ENCODE measurements at regions of chr13 and their contacts with region 1.

Region 1: GRCh38 chr13:28792992-28793391 is 27.1 kb upstream of the MTUS2 start:
- DNase-seq: no peak
- ATAC-seq: no peak
- H3K4me3 ChIP-seq: no peak overlapping the region
- H3K27ac ChIP-seq: no peak overlapping the region
- H3K4me1 ChIP-seq: peaks cover 0 to 7% of the 10 kb centered on the region in 2 experiments; a peak in 2 of 5 replicates
- H3K27me3 ChIP-seq: peaks cover 0 to 8% of the 10 kb centered on the region in 2 experiments; a peak in 2 of 5 replicates
- CTCF ChIP-seq: no peak
- EP300 ChIP-seq: no peak
- POLR2A ChIP-seq: no peak
- RAD21 ChIP-seq: no peak

Region 2: DNA sequence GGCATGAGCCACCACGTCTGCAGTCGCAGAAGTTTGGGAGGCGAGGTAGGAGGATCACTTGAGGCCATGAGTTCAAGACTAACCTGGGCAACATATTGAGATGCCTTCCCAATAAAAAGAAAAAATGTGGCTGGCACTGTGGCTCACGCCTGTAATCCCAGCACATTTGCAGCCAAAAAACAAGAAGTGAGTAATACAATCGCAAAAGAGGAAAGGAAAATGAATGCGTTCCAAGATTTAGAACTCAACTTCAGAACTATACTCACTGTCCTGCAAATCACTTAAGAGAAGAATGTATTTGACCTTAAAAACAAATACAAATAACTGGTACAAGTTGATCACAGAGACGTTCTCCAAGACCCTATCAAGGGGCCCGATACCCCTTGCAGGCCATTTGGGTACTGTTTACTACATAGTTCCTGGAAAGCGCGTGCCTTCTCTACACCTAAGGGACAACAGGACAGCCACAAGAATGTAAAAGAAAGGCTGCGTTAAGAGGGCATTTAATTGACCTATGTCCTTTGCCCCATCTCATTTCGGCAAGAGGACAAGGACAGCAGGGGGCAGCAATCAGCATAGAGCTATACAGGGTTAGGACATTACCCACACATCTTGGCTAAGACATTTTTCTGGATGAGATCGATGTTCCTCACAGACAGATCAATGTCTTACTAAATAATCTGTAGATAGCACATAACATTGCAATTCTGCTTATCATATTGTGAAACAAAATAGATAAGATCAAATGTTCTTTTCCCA is 733.9 kb before region 1 on chr13:
- CTCF ChIA-PET with region 1: no interaction called
- POLR2A ChIA-PET with region 1: no interaction called
- in situ Hi-C with region 1: loop called (anchors 25 kb)
- intact Hi-C with region 1: no loop called
- DNase-seq: peak; percentile 43 to 54 (median 46)
- ATAC-seq: peak; percentile 82
- H3K4me3 ChIP-seq: no peak overlapping the region
- H3K27ac ChIP-seq: no peak overlapping the region
- H3K4me1 ChIP-seq: no peaks in the 10 kb centered on the region
- H3K27me3 ChIP-seq: peaks cover 2 to 21% of the 10 kb centered on the region in 2 experiments; a peak in 4 of 5 replicates
- CTCF ChIP-seq: peak; percentile 52 to 60 (median 54); a peak in 5 of 6 replicates
- EP300 ChIP-seq: no peak
- POLR2A ChIP-seq: no peak
- RAD21 ChIP-seq: peak; percentile 32 to 71

Region 3: DNA sequence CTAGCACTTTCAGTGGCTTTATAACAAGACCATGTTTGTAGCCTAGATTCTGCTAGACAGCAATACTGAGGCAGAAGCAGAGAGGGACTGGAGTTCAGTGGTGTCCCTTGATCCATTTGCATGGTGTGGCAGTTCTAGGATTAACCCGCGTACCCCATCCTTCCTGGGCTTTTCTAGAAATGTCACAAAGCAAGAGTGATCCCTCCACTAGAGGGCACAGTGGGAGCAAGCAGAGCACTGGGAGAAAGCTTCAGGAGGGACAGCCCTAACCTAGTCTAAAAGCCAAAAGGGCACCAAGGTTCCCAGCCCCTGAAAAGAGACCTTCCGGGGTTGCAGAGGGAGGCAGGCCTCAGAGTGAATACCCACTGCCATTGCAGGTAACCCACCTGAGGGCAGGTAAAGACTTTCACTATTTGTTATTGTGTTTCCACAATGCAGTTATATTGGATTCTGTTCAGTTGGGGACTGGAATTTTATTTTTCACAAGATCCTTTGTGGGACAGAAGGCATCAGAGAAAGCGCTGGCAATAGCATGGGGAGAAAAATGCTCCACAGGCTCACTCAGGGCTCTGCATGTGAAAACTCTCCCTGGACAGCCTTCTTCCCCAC is 468.7 kb before region 1 on chr13:
- CTCF ChIA-PET with region 1: no interaction called
- POLR2A ChIA-PET with region 1: no interaction called
- in situ Hi-C with region 1: loop called (anchors 10 kb)
- intact Hi-C with region 1: loop called (anchors 1 kb)
- DNase-seq: peak; percentile 43 to 81 (median 62)
- ATAC-seq: peak; percentile 95
- H3K4me3 ChIP-seq: no peak overlapping the region
- H3K27ac ChIP-seq: no peak overlapping the region
- H3K4me1 ChIP-seq: peaks cover 3 to 4% of the 10 kb centered on the region in 2 experiments; a peak in 3 of 5 replicates
- H3K27me3 ChIP-seq: no peaks in the 10 kb centered on the region
- CTCF ChIP-seq: peak; percentile 66 to 77 (median 72)
- EP300 ChIP-seq: no peak
- POLR2A ChIP-seq: no peak
- RAD21 ChIP-seq: peak; percentile 73 to 86

Region 4: GRCh38 chr13:28679628-28680027 is 113.4 kb before region 1 on chr13:
- CTCF ChIA-PET with region 1: interaction called, 3 read pairs
- POLR2A ChIA-PET with region 1: no interaction called
- in situ Hi-C with region 1: loop called (anchors 10 kb)
- intact Hi-C with region 1: loop called (anchors 5 kb)
- DNase-seq: no peak
- ATAC-seq: peak; percentile 71
- H3K4me3 ChIP-seq: no peak overlapping the region
- H3K27ac ChIP-seq: no peak overlapping the region
- H3K4me1 ChIP-seq: peaks cover 0 to 6% of the 10 kb centered on the region in 2 experiments; a peak in 3 of 5 replicates
- H3K27me3 ChIP-seq: no peaks in the 10 kb centered on the region
- CTCF ChIP-seq: peak; percentile 10 to 42 (median 16); a peak in 3 of 6 replicates
- EP300 ChIP-seq: no peak
- POLR2A ChIP-seq: no peak
- RAD21 ChIP-seq: peak in 1 of 2 experiments; percentile 49; a peak in 2 of 4 replicates

Region 5: DNA sequence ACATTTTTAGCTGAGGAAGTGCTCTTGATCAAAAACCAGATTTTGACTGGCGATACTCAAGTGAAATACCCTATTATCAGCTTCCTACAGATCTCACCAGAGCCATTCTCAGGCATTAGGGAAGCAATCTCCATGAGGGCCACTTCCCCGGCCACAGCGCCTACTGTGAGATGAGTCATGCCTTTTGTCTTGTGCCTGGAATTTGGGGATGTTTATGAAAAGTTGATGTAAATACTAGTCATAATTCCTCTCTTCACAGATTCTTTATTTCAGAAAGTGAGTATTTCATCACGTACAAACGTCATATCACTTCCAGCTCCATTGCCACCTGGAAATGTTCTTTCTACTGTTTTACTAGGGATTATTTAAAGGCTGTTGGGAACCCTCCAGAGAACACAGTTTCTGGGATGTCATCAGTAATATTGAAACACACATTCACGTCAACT is 48.9 kb before region 1 on chr13:
- CTCF ChIA-PET with region 1: no interaction called
- POLR2A ChIA-PET with region 1: no interaction called
- in situ Hi-C with region 1: no loop called
- intact Hi-C with region 1: loop called (anchors 5 kb)
- DNase-seq: peak in 2 of 4 experiments; percentile 9 to 38
- ATAC-seq: no peak
- H3K4me3 ChIP-seq: no peak overlapping the region
- H3K27ac ChIP-seq: no peak overlapping the region
- H3K4me1 ChIP-seq: no peaks in the 10 kb centered on the region; a peak in 1 of 5 replicates
- H3K27me3 ChIP-seq: no peaks in the 10 kb centered on the region
- CTCF ChIP-seq: no peak
- EP300 ChIP-seq: no peak
- POLR2A ChIP-seq: no peak
- RAD21 ChIP-seq: no peak

Region 6: DNA sequence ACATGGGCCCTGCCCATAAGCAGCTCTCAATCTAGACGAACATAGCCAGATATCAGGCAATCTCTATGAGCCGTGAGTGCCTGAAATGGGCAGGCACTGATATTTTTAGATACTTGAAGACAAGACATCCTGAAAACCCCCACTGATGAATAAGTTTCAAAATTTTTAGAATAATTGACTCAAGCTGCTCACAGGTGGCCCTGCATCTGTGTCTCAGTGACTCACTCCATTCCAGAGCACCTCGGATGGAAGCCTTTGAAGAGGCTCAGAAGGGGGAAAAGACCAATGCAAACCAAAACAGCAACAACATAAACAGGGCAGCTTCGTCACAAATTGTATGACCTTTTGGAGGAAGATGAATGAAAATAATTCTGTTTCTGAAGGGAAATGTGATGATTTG is 31.4 kb before region 1 on chr13:
- CTCF ChIA-PET with region 1: no interaction called
- POLR2A ChIA-PET with region 1: no interaction called
- in situ Hi-C with region 1: no loop called
- intact Hi-C with region 1: no loop called
- DNase-seq: no peak
- ATAC-seq: no peak
- H3K4me3 ChIP-seq: no peak overlapping the region
- H3K27ac ChIP-seq: no peak overlapping the region
- H3K4me1 ChIP-seq: no peaks in the 10 kb centered on the region
- H3K27me3 ChIP-seq: peaks cover 0 to 7% of the 10 kb centered on the region in 2 experiments; a peak in 2 of 5 replicates
- CTCF ChIP-seq: no peak
- EP300 ChIP-seq: no peak
- POLR2A ChIP-seq: no peak
- RAD21 ChIP-seq: no peak

Region 7: DNA sequence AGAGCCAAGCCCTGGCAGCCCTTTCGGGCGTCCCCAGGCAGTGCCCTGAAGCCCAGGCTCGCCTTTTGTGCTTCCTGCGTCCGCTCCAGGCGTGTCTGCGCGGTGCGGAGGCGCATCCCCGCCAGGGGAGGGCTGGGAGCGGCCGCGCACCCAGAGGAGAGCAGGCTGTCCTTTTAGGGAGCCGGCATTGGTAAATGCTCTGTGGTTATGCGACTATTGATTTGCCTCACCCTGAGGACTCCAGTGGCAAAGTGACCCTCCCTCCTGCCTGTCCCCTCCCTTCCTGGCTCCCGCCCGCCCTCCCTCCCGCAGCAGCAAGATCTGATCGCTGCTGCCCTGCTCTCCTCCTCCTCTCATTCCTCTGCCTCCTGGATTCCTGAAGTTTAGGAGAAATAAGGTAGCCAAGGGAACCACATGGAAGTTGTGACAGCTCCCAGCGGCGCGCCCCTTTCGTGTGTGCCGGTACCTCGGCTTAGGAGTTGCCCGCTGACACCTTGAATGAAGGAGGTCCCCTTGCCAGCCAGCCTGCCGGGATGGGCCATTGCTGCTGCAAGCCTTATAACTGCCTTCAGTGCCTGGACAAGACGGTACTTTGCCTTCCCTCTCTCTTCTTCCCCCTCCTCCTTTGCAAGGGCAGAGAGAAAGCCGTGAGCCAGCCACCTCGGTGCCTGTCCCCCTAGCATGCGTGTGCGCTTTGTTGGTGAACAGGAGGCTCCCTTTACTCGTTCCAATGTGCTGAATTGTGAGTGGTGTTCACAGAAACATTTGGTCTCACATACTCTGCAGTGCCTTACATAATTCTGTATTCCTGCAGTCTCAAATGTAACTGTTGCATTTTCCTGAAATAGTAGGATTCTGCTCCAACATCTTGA is 635.6 kb after region 1 on chr13:
- CTCF ChIA-PET with region 1: no interaction called
- POLR2A ChIA-PET with region 1: no interaction called
- in situ Hi-C with region 1: no loop called
- intact Hi-C with region 1: no loop called
- DNase-seq: peak in 1 of 4 experiments; percentile 11
- ATAC-seq: peak; percentile 85
- H3K4me3 ChIP-seq: 0 out of 2 replicates have a peak overlapping the region, but pooled peaks have one; percentile 13
- H3K27ac ChIP-seq: no peak overlapping the region
- H3K4me1 ChIP-seq: peaks cover 0 to 4% of the 10 kb centered on the region in 2 experiments; a peak in 1 of 5 replicates
- H3K27me3 ChIP-seq: peaks cover 4% of the 10 kb centered on the region in 2 experiments; a peak in 2 of 5 replicates
- CTCF ChIP-seq: no peak
- EP300 ChIP-seq: no peak
- POLR2A ChIP-seq: no peak
- RAD21 ChIP-seq: no peak

Measured in K562 (cell line).